ENCODE measurements at regions of chr12 and their contacts with region 1.

Region 1: GRCh38 chr12:9797722-9798619 is 29.3 kb upstream of the KLRF1 start:
- DNase-seq: peak; percentile 66
- H3K4me3 Mint-ChIP-seq: no peak overlapping the region
- H3K27ac Mint-ChIP-seq: peak overlapping the region; percentile 11
- H3K4me1 Mint-ChIP-seq: peaks cover 46% of the 10 kb centered on the region
- H3K27me3 Mint-ChIP-seq: peaks cover 3% of the 10 kb centered on the region

Region 2: DNA sequence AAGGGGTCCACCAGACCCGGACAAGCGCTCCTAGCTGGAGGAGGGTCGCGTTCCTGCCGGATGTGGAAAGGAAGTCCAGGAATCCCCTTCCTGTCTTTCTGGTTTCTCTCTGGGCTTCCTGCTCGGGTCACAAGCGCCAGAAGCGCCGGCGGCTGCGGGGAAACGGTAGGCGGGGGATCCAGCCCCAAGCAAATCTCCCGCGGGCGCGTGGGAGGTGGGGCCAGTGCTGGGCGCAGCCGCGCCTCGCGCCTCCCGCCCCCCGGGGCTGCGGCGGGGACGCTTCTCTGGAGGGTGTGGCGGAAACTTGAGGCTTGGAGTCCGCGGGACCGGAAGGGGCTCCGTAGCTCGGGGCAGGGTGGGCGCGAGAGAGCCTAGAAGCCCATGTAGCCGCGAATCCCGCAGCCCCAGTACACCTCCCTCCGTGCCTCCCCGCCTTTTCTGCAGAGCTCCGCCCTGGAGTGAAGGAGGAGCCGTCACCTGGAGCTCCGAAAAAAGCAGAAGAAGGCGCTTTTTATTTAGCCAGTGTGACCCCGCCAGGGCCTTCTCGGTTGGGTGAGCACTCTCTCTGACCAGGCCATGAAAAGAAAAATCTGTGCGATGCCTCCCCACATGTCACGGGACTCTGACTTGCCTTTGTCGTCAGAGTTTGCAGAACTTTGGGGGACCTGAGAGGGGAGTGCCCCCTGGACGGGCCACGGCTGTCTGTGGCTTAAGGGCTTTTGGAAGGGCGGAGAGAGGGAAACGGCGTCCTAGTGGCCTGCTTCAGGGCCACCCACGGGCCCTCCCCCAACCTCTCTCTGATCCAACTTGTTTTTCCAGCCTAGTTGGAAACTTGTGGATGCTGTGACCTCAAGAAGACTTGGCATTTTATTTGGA is 149.9 kb before region 1 on chr12:
- intact Hi-C with region 1: loop called (anchors 1 kb)
- DNase-seq: peak; percentile 95
- H3K4me3 Mint-ChIP-seq: peak overlapping the region; percentile 94
- H3K27ac Mint-ChIP-seq: peak overlapping the region; percentile 96
- H3K4me1 Mint-ChIP-seq: peaks cover 46% of the 10 kb centered on the region
- H3K27me3 Mint-ChIP-seq: no peaks in the 10 kb centered on the region

Region 3: GRCh38 chr12:9741726-9742125 is 56.2 kb before region 1 on chr12:
- intact Hi-C with region 1: loop called (anchors 1 kb)
- DNase-seq: peak; percentile 80
- H3K4me3 Mint-ChIP-seq: peak overlapping the region; percentile 65
- H3K27ac Mint-ChIP-seq: peak overlapping the region; percentile 95
- H3K4me1 Mint-ChIP-seq: peaks cover 61% of the 10 kb centered on the region
- H3K27me3 Mint-ChIP-seq: peaks cover 1% of the 10 kb centered on the region

Region 4: DNA sequence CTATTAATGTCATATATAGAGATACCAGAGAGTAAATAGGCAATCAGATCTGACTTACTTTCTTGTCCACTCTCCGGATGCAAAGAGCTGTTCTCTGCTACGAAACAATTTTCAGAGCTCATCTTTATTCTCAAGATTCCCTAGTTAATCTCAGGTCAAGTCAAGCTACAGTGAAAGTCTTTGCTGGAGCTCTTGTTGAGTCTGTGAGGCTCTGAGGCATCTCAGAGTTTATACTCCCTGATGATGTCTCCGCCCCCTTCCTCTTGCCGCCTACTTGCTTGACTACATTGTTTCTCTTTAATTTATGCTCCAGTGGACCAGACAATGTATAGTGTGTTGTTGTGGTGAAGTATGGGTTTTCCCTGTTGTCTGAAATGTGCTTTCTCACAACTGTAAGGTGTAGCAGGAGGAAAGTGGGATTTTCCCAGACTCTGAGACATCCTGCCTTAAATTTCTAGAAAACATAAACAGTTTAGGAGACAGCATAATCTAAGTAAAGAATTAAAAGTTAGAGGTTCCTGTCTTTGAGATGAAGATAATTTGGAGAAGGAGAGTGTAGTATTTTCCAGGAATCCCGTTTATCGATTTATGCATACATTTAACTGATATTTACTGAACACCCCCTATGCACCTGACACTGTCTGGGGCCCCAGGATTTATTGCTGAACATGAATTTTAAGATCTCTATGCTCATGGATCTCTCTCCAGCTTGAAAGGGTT is 37.1 kb before region 1 on chr12 and contains the start of gene CD69:
- intact Hi-C with region 1: loop called (anchors 1 kb)
- DNase-seq: peak; percentile 83
- H3K4me3 Mint-ChIP-seq: peak within 1 kb of the TSS; percentile 99
- H3K27ac Mint-ChIP-seq: peak within 1 kb of the TSS; percentile 96
- H3K4me1 Mint-ChIP-seq: peaks cover 48% of the 10 kb centered on the region
- H3K27me3 Mint-ChIP-seq: no peaks in the 10 kb centered on the region
- total RNA-seq, gene CD69: 70.9 and 72.2 TPM in 2 replicates

Region 5: GRCh38 chr12:9869307-9870161 is 71.6 kb after region 1 on chr12 and contains the start of gene CLEC2B:
- intact Hi-C with region 1: loop called (anchors 1 kb)
- DNase-seq: peak; percentile 26
- H3K4me3 Mint-ChIP-seq: peak within 1 kb of the TSS; percentile 85
- H3K27ac Mint-ChIP-seq: peak within 1 kb of the TSS; percentile 91
- H3K4me1 Mint-ChIP-seq: peaks cover 29% of the 10 kb centered on the region
- H3K27me3 Mint-ChIP-seq: no peaks in the 10 kb centered on the region
- total RNA-seq, gene CLEC2B: 5.0 and 5.1 TPM in 2 replicates

Region 6: GRCh38 chr12:9925708-9926393 is 127.9 kb after region 1 on chr12:
- intact Hi-C with region 1: no loop called
- DNase-seq: no peak
- H3K4me3 Mint-ChIP-seq: peak overlapping the region; percentile 34
- H3K27ac Mint-ChIP-seq: no peak overlapping the region
- H3K4me1 Mint-ChIP-seq: peaks cover 22% of the 10 kb centered on the region
- H3K27me3 Mint-ChIP-seq: peaks cover 28% of the 10 kb centered on the region